CD4-positive, alpha-beta memory T cell (primary cell): ENCODE measurements at regions of chr22 and their contacts with region 1.

Region 1: GRCh38 chr22:49827853-49828598 is at the start of gene BRD1:
- DNase-seq: peak in 4 of 5 donors; percentile 52 to 62 (median 58)
- H3K4me3 ChIP-seq: peak within 1 kb of the TSS; percentile 52 to 71
- H3K4me3 Mint-ChIP-seq: peak within 1 kb of the TSS; percentile 91 to 98 (median 94)
- H3K27ac ChIP-seq: peak within 1 kb of the TSS; percentile 78
- H3K27ac Mint-ChIP-seq: peak within 1 kb of the TSS; percentile 79 to 99 (median 96)
- H3K4me1 ChIP-seq: peaks cover 56% of the 10 kb centered on the region
- H3K4me1 Mint-ChIP-seq: peaks cover 25 to 68% (median 53%) of the 10 kb centered on the region in 4 donors
- H3K27me3 ChIP-seq: no peaks in the 10 kb centered on the region
- H3K27me3 Mint-ChIP-seq: no peaks in the 10 kb centered on the region
- total RNA-seq, gene BRD1: 84.0 to 88.1 TPM

Region 2: GRCh38 chr22:49425356-49425755 is 402.7 kb before region 1 on chr22:
- CTCF ChIA-PET with region 1: no interaction called
- POLR2A ChIA-PET with region 1: no interaction called
- intact Hi-C with region 1: no loop called
- DNase-seq: no peak
- H3K4me3 ChIP-seq: no peak overlapping the region
- H3K4me3 Mint-ChIP-seq: no peak overlapping the region
- H3K27ac ChIP-seq: no peak overlapping the region
- H3K27ac Mint-ChIP-seq: no peak overlapping the region
- H3K4me1 ChIP-seq: no peaks in the 10 kb centered on the region
- H3K4me1 Mint-ChIP-seq: no peaks in the 10 kb centered on the region
- H3K27me3 ChIP-seq: no peaks in the 10 kb centered on the region
- H3K27me3 Mint-ChIP-seq: peaks cover 3 to 5% of the 10 kb centered on the region in 2 donors

Region 3: GRCh38 chr22:49789289-49790141 is 38.5 kb before region 1 on chr22:
- CTCF ChIA-PET with region 1: no interaction called
- POLR2A ChIA-PET with region 1: interaction called, 3 read pairs
- intact Hi-C with region 1: loop called (anchors 5 kb)
- DNase-seq: peak; percentile 31 to 69 (median 47)
- H3K4me3 ChIP-seq: peak overlapping the region in 1 of 2 donors; percentile 36
- H3K4me3 Mint-ChIP-seq: peak overlapping the region; percentile 20 to 85 (median 74)
- H3K27ac ChIP-seq: peak overlapping the region; percentile 27
- H3K27ac Mint-ChIP-seq: peak overlapping the region; percentile 87 to 94 (median 89)
- H3K4me1 ChIP-seq: peaks cover 43% of the 10 kb centered on the region
- H3K4me1 Mint-ChIP-seq: peaks cover 27 to 80% (median 49%) of the 10 kb centered on the region in 4 donors
- H3K27me3 ChIP-seq: no peaks in the 10 kb centered on the region
- H3K27me3 Mint-ChIP-seq: no peaks in the 10 kb centered on the region

Region 4: GRCh38 chr22:49838771-49839717 is 11.0 kb after region 1 on chr22:
- CTCF ChIA-PET with region 1: interaction called, 4 read pairs
- POLR2A ChIA-PET with region 1: interaction called, 27 read pairs
- intact Hi-C with region 1: loop called (anchors 1 kb)
- DNase-seq: peak; percentile 91 to 98 (median 95)
- H3K4me3 ChIP-seq: peak overlapping the region; percentile 7 to 53
- H3K4me3 Mint-ChIP-seq: peak overlapping the region; percentile 71 to 91 (median 84)
- H3K27ac ChIP-seq: peak overlapping the region; percentile 79
- H3K27ac Mint-ChIP-seq: peak overlapping the region; percentile 80 to 99 (median 97)
- H3K4me1 ChIP-seq: peaks cover 31% of the 10 kb centered on the region
- H3K4me1 Mint-ChIP-seq: peaks cover 16 to 38% (median 25%) of the 10 kb centered on the region in 4 donors
- H3K27me3 ChIP-seq: no peaks in the 10 kb centered on the region
- H3K27me3 Mint-ChIP-seq: no peaks in the 10 kb centered on the region

Region 5: GRCh38 chr22:49852898-49853894 is 25.2 kb after region 1 on chr22 and contains the start of gene ZBED4:
- CTCF ChIA-PET with region 1: interaction called, 3 read pairs
- POLR2A ChIA-PET with region 1: interaction called, 18 read pairs
- intact Hi-C with region 1: loop called (anchors 1 kb)
- DNase-seq: peak; percentile 95 to 100 (median 99)
- H3K4me3 ChIP-seq: peak within 1 kb of the TSS; percentile 46 to 69
- H3K4me3 Mint-ChIP-seq: peak within 1 kb of the TSS; percentile 92 to 97 (median 94)
- H3K27ac ChIP-seq: peak within 1 kb of the TSS; percentile 75
- H3K27ac Mint-ChIP-seq: peak within 1 kb of the TSS; percentile 92 to 96 (median 94)
- H3K4me1 ChIP-seq: peaks cover 36% of the 10 kb centered on the region
- H3K4me1 Mint-ChIP-seq: peaks cover 29 to 64% (median 48%) of the 10 kb centered on the region in 4 donors
- H3K27me3 ChIP-seq: no peaks in the 10 kb centered on the region
- H3K27me3 Mint-ChIP-seq: no peaks in the 10 kb centered on the region
- total RNA-seq, gene ZBED4: 17.7 to 18.6 TPM

Region 6: GRCh38 chr22:49917974-49918910 is 90.2 kb after region 1 on chr22 and contains the starts of genes ALG12 and CRELD2:
- CTCF ChIA-PET with region 1: no interaction called
- POLR2A ChIA-PET with region 1: interaction called, 5 read pairs
- intact Hi-C with region 1: loop called (anchors 2 kb)
- DNase-seq: peak; percentile 95 to 97 (median 95)
- H3K4me3 ChIP-seq: peak within 1 kb of the TSS; percentile 29 to 85
- H3K4me3 Mint-ChIP-seq: peak within 1 kb of the TSS; percentile 86 to 96 (median 94)
- H3K27ac ChIP-seq: peak within 1 kb of the TSS; percentile 88
- H3K27ac Mint-ChIP-seq: peak within 1 kb of the TSS; percentile 79 to 98 (median 95)
- H3K4me1 ChIP-seq: peaks cover 25% of the 10 kb centered on the region
- H3K4me1 Mint-ChIP-seq: peaks cover 13 to 39% (median 22%) of the 10 kb centered on the region in 4 donors
- H3K27me3 ChIP-seq: no peaks in the 10 kb centered on the region
- H3K27me3 Mint-ChIP-seq: no peaks in the 10 kb centered on the region
- total RNA-seq, gene ALG12: 19.6 to 27.2 TPM
- total RNA-seq, gene CRELD2: 36.0 to 36.2 TPM

Region 7: DNA sequence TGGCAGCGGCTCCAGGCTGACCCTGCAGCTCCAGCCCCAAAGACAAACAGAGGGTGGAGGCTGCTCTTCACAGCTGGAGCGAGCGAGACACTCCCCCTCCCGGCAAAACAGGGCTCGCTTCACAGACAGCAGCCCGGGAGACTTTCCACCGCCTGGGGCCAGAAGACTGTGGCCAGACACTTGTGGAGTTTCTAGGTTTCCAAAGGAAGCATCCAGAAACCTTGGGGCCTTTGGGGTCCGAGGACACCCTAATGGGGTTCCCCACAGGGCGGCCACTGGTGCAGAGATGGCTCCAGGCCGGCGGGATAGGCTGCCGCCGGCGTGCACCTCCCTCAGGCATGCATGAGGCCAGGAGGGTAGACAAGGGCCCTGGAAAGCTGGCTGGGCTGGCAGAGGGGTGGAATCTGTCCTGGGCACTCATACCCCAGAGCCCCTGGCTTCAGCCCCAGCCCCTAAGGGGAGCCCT is 184.7 kb after region 1 on chr22 and contains the start of gene IL17REL:
- CTCF ChIA-PET with region 1: no interaction called
- POLR2A ChIA-PET with region 1: no interaction called
- intact Hi-C with region 1: loop called (anchors 10 kb)
- DNase-seq: no peak
- H3K4me3 ChIP-seq: no peak within 1 kb of the TSS
- H3K4me3 Mint-ChIP-seq: peak within 1 kb of the TSS in 6 of 8 donors; percentile 46 to 79 (median 56)
- H3K27ac ChIP-seq: peak within 1 kb of the TSS; percentile 61
- H3K27ac Mint-ChIP-seq: peak within 1 kb of the TSS in 6 of 7 donors; percentile 17 to 84 (median 70)
- H3K4me1 ChIP-seq: peaks cover 59% of the 10 kb centered on the region
- H3K4me1 Mint-ChIP-seq: peaks cover 10 to 28% (median 19%) of the 10 kb centered on the region in 4 donors
- H3K27me3 ChIP-seq: no peaks in the 10 kb centered on the region
- H3K27me3 Mint-ChIP-seq: peaks cover 1 to 8% of the 10 kb centered on the region in 2 donors
- total RNA-seq, gene IL17REL: not detected